ENCODE measurements at regions of chr2 and their contacts with region 1.

Region 1: GRCh38 chr2:227376911-227377396 is 2.2 kb downstream of the TM4SF20 start:
- DNase-seq: no peak
- H3K4me3 Mint-ChIP-seq: no peak overlapping the region
- H3K27ac Mint-ChIP-seq: no peak overlapping the region
- H3K4me1 Mint-ChIP-seq: peaks cover 13% of the 10 kb centered on the region
- H3K27me3 Mint-ChIP-seq: no peaks in the 10 kb centered on the region

Region 2: DNA sequence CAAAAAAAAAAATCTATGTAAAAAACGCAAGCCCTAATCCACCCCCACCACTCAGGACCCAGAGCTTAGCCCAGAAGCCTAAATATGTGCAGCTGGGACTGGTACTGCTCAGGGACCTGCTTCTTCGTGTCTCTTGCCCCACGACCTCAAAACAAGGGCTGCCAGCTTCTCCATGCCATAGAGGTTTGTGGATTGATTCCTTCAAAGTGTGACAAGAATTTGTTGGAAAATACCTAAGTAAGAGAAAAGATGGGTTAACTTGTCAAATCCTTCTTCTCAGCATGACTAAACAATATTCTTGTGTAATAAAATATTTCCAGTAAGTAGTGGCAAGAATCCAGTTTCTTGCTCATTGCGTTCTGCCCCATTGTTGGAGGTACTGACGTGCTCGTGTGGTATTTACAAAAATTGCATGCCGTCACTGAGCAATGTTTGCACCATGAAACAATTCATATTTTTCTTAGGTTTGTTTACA is 11.6 kb after region 1 on chr2:
- CTCF ChIA-PET with region 1: interaction called, 9 read pairs
- intact Hi-C with region 1: loop called (anchors 1 kb)
- DNase-seq: no peak
- H3K4me3 Mint-ChIP-seq: no peak overlapping the region
- H3K27ac Mint-ChIP-seq: no peak overlapping the region
- H3K4me1 Mint-ChIP-seq: peaks cover 23% of the 10 kb centered on the region
- H3K27me3 Mint-ChIP-seq: no peaks in the 10 kb centered on the region

Region 3: GRCh38 chr2:227436436-227437174 is 59.7 kb after region 1 on chr2:
- CTCF ChIA-PET with region 1: no interaction called
- intact Hi-C with region 1: no loop called
- DNase-seq: no peak
- H3K4me3 Mint-ChIP-seq: no peak overlapping the region
- H3K27ac Mint-ChIP-seq: no peak overlapping the region
- H3K4me1 Mint-ChIP-seq: no peaks in the 10 kb centered on the region
- H3K27me3 Mint-ChIP-seq: no peaks in the 10 kb centered on the region